Heart left ventricle (tissue), 16 donors: ENCODE measurements at regions of chr1 and their contacts with region 1.

Region 1: GRCh38 chr1:16038620-16038912 is 5.0 kb upstream of the CLCNKB start:
- DNase-seq: no peak
- ATAC-seq: no peak
- H3K4me3 ChIP-seq: no peak overlapping the region
- H3K27ac ChIP-seq: no peak overlapping the region
- H3K4me1 ChIP-seq: no peaks in the 10 kb centered on the region
- H3K27me3 ChIP-seq: no peaks in the 10 kb centered on the region
- CTCF ChIP-seq: no peak
- POLR2A ChIP-seq: no peak

Region 2: GRCh38 chr1:16067127-16067768 is 28.7 kb after region 1 on chr1:
- intact Hi-C with region 1: loop called in 1 of 10 experiments (anchors 1 kb)
- DNase-seq: no peak
- ATAC-seq: peak in 3 of 4 donors; percentile 16 to 30 (median 28)
- H3K4me3 ChIP-seq: no peak overlapping the region
- H3K27ac ChIP-seq: no peak overlapping the region
- H3K4me1 ChIP-seq: peaks cover 0 to 29% (median 18%) of the 10 kb centered on the region in 12 donors
- H3K27me3 ChIP-seq: peaks cover 0 to under 1% (median 0%) of the 10 kb centered on the region in 9 donors
- CTCF ChIP-seq: no peak
- POLR2A ChIP-seq: no peak